ENCODE measurements at regions of chr9 and their contacts with region 1.

Region 1: DNA sequence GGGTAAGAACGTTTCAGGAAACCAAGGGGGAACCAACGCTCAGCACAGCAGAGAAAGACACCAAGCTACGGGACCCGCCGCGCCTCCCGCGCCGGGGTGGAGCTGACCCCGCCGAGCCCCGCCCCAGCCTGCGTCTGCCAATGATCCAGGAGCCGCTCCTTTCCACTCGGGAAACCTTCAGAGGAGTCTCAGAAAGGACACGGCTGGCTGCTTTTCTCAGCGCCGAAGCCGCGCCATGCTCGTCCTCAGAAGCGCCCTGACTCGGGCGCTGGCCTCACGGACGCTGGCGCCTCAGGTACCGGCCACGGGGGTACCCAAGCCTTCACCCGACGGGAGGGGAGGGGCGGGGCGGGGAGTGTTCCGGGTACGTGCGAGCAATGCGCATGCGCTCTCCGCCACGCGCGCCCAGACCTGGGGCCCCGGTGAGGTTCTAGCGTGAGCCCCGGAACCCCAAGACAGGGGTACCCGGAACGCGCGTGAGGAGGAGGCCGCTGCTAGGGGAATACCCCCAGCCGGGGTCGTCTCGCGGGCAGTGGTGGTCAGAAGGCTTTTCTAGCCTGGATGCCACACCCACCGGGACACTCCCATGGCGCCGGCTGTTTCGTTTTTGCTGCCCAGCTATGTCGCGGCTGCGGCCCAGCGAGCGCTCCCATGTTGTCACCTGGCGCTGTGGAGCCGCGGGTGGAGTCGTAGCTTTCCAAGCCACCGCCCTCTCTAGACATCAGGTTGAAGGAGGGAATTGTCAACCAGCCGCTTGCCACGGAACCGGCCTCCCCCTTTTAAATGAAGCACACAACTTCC is at the start of gene NIPSNAP3A:
- DNase-seq: peak; percentile 90
- H3K4me3 Mint-ChIP-seq: peak within 1 kb of the TSS; percentile 96
- H3K27ac Mint-ChIP-seq: peak within 1 kb of the TSS; percentile 89
- H3K4me1 Mint-ChIP-seq: peaks cover 14% of the 10 kb centered on the region
- H3K27me3 Mint-ChIP-seq: no peaks in the 10 kb centered on the region
- total RNA-seq, gene NIPSNAP3A: 11.1 to 12.5 TPM

Region 2: DNA sequence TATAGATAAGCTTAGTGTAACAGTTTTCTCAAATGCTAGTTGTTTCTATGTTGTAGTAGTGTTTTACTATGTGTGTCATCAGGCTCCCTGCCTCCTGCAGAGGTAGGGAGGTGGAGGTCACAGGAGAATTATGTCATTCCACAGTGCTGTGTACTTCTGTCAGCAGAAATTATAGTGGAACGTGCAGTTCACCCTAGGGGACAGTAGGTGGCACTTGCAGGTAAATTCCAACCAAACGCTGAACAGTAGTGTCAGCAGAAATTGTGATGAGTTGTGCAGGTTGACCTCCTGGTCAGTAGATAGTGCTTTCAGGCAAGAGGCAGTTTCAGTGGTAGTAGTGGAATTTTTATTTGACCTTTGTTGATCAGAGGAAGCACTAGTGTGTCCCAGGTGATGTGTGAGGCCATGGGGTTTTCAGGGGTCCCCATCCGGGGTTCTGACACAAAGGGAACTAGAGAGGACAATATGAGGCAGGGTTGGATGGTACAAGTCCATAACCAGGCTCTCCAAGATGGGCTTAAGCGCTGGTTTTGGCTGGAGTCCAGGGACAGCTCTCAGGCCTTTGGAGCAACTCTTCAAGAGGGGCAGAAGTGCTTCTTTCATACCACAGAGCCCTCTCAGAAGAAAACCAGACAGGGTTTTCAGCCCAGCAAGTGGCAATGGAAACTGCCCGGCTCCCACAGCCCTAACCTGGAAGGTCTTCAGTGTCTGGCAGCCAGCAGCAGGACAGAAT is 1349.7 kb before region 1 on chr9:
- CTCF ChIA-PET with region 1: no interaction called
- POLR2A ChIA-PET with region 1: no interaction called
- intact Hi-C with region 1: loop called (anchors 2 kb)
- DNase-seq: peak; percentile 27
- H3K4me3 Mint-ChIP-seq: no peak overlapping the region
- H3K27ac Mint-ChIP-seq: no peak overlapping the region
- H3K4me1 Mint-ChIP-seq: no peaks in the 10 kb centered on the region
- H3K27me3 Mint-ChIP-seq: peaks cover 2% of the 10 kb centered on the region

Region 3: DNA sequence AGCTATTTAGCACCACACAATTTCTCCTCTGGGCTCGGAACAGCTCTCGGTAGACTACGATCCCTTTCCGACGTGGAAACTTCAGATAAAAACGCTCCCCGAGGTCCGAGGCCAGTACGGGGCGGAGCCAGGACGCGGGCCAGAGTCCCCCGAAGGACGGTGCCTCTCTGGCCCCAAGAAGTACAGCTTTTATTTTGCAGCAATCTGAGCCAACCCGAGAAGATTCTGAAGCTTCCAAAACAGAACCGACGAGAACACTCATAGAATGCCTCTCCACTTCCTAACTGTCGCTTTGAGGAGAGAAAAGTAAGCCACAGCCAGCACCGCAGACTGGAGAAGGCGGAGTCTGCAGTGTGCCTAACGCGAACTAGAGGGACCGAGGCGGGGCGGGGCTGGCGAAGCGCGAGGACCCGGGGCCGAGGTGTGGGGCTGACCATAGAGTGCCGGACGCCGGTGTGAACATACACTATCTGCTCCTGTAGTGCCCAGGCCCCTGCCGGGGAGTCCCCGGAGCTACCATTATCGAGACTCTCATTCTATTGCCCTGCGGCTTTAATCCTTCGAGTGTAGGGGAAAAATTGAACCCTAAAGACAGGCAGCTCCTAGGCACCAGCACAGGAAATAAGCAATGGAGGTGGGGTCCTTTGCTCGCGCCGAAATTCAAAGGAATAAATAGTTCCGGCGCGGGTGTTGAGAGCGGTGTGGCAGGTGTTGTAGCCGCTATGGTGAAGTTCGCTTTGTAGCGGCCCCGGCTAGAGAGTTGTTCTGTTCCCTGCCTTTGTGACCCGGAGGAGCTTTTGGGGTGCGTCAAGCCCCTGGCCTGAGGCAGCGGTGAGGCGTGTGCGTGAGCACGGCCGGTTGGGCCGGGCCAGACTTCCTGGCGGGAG is 653.9 kb before region 1 on chr9 and contains the start of gene SMC2:
- CTCF ChIA-PET with region 1: no interaction called
- POLR2A ChIA-PET with region 1: interaction called, 9 read pairs
- intact Hi-C with region 1: loop called (anchors 1 kb)
- DNase-seq: peak; percentile 94
- H3K4me3 Mint-ChIP-seq: peak within 1 kb of the TSS; percentile 90
- H3K27ac Mint-ChIP-seq: peak within 1 kb of the TSS; percentile 99
- H3K4me1 Mint-ChIP-seq: peaks cover 32% of the 10 kb centered on the region
- H3K27me3 Mint-ChIP-seq: no peaks in the 10 kb centered on the region
- total RNA-seq, gene SMC2: 61.0 to 61.9 TPM

Region 4: GRCh38 chr9:104386425-104387069 is 361.2 kb before region 1 on chr9:
- CTCF ChIA-PET with region 1: interaction called, 3 read pairs
- POLR2A ChIA-PET with region 1: no interaction called
- intact Hi-C with region 1: loop called (anchors 10 kb)
- DNase-seq: no peak
- H3K4me3 Mint-ChIP-seq: no peak overlapping the region
- H3K27ac Mint-ChIP-seq: no peak overlapping the region
- H3K4me1 Mint-ChIP-seq: no peaks in the 10 kb centered on the region
- H3K27me3 Mint-ChIP-seq: no peaks in the 10 kb centered on the region

Region 5: GRCh38 chr9:104765138-104765537 is 17.4 kb after region 1 on chr9:
- CTCF ChIA-PET with region 1: no interaction called
- POLR2A ChIA-PET with region 1: interaction called, 6 read pairs
- intact Hi-C with region 1: loop called (anchors 1 kb)
- DNase-seq: no peak
- H3K4me3 Mint-ChIP-seq: no peak overlapping the region
- H3K27ac Mint-ChIP-seq: no peak overlapping the region
- H3K4me1 Mint-ChIP-seq: peaks cover 6% of the 10 kb centered on the region
- H3K27me3 Mint-ChIP-seq: no peaks in the 10 kb centered on the region

Region 6: GRCh38 chr9:105244003-105244733 is 496.4 kb after region 1 on chr9 and contains the start of gene SLC44A1:
- CTCF ChIA-PET with region 1: no interaction called
- POLR2A ChIA-PET with region 1: interaction called, 12 read pairs
- intact Hi-C with region 1: loop called (anchors 1 kb)
- DNase-seq: peak; percentile 95
- H3K4me3 Mint-ChIP-seq: peak within 1 kb of the TSS; percentile 82
- H3K27ac Mint-ChIP-seq: peak within 1 kb of the TSS; percentile 60
- H3K4me1 Mint-ChIP-seq: peaks cover 16% of the 10 kb centered on the region
- H3K27me3 Mint-ChIP-seq: peaks cover 6% of the 10 kb centered on the region
- total RNA-seq, gene SLC44A1: 11.8 to 12.2 TPM

Region 7: GRCh38 chr9:105694190-105694847 is 946.6 kb after region 1 on chr9 and contains the start of gene TMEM38B:
- CTCF ChIA-PET with region 1: no interaction called
- POLR2A ChIA-PET with region 1: no interaction called
- intact Hi-C with region 1: loop called (anchors 1 kb)
- DNase-seq: peak; percentile 82
- H3K4me3 Mint-ChIP-seq: peak within 1 kb of the TSS; percentile 80
- H3K27ac Mint-ChIP-seq: peak within 1 kb of the TSS; percentile 26
- H3K4me1 Mint-ChIP-seq: peaks cover 25% of the 10 kb centered on the region
- H3K27me3 Mint-ChIP-seq: peaks cover 20% of the 10 kb centered on the region
- total RNA-seq, gene TMEM38B: 12.1 to 13.8 TPM

Measured in activated CD4-positive, alpha-beta memory T cell treated with anti-CD3 and anti-CD28 coated beads for 36 hours (primary cell).